Activated CD4-positive, alpha-beta T cell treated with anti-CD3 and anti-CD28 coated beads, Interleukin-2, amount 10 ng/mL, durations not matched to agents 24 days and 14 days (primary cell): ENCODE measurements at regions of chr22 and their contacts with region 1.

Region 1: DNA sequence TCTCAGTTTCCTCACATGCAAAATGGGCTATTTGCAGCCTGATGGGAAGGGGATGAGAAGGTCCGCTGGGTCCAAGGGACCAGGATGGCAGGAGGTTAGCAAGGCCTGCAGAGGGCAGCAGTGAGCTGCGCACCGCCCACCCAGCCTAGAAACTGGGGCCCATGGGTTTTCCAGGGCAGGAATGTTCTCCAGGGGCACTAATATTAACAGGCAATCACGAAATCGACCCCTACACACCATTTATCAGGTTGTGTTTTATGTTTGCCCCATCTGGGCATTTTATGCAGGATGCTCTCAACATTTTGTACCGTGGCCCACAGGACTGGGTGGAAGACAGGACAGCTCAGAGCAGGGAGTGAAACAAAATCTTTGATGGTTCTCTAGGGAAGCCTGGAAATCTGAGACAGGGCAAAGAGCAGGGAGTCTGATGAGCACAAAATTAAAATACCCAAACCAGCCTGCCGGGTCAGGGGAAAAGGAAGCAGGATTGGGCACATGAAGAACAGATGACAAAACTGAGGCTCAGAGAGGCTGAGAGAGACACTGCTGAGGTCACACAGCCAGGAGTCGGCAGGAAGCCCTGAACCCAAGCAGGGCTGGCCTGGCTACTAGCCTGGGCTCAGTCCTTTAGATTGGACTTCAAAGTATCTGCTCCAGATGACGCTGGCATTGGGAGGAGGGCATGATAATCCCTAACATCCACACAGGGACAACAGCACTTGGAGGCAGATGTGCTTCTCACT is 1.6 kb upstream of the BCR start:
- DNase-seq: peak; percentile 89
- H3K4me3 Mint-ChIP-seq: peak overlapping the region; percentile 54
- H3K27ac Mint-ChIP-seq: peak overlapping the region; percentile 51
- H3K4me1 Mint-ChIP-seq: peaks cover 53% of the 10 kb centered on the region
- H3K27me3 Mint-ChIP-seq: no peaks in the 10 kb centered on the region

Region 2: DNA sequence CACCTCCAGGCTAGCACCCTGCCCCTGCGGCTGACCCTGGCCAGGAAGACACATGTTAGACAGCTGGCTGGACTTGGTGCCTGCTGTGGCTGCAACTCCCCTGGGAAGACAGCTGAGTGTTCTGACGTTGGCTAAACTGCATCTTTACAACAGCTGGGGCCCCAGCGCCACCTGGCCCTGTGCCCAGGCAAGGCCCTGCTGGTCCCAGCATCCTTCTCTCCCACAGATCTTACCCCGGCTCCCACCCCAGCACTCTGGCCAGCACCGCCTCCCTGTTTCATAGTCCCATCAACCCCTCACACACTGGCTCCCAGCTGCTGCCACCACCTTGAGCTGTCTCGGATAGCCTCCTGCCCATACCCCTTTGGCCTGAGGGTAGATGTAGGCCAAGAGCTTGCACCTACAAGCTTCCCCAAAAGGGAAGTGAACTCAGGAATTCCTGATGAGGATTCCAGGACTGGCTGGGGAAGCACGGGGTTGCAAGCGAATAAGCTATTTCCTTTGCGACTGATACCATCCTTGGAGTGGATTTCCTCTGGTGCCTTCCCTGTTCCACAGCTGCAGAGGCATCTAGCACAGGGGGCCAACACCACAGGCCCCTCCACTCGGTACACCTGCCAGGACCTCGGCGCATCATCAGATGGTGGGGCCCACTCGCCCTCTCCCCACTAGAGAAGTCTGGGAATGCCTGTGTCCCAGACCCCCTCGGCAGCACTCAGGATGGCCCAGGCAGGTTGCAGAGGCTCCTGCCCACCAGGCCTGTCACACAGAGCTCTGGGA is 65.4 kb before region 1 on chr22:
- intact Hi-C with region 1: no loop called
- DNase-seq: no peak
- H3K4me3 Mint-ChIP-seq: no peak overlapping the region
- H3K27ac Mint-ChIP-seq: no peak overlapping the region
- H3K4me1 Mint-ChIP-seq: no peaks in the 10 kb centered on the region
- H3K27me3 Mint-ChIP-seq: no peaks in the 10 kb centered on the region

Region 3: GRCh38 chr22:23219822-23220484 is 41.3 kb after region 1 on chr22:
- intact Hi-C with region 1: loop called (anchors 1 kb)
- DNase-seq: peak; percentile 85
- H3K4me3 Mint-ChIP-seq: peak overlapping the region; percentile 78
- H3K27ac Mint-ChIP-seq: peak overlapping the region; percentile 91
- H3K4me1 Mint-ChIP-seq: peaks cover 90% of the 10 kb centered on the region
- H3K27me3 Mint-ChIP-seq: no peaks in the 10 kb centered on the region

Region 4: GRCh38 chr22:23240639-23241389 is 62.1 kb after region 1 on chr22:
- intact Hi-C with region 1: loop called (anchors 1 kb)
- DNase-seq: peak; percentile 73
- H3K4me3 Mint-ChIP-seq: peak overlapping the region; percentile 2
- H3K27ac Mint-ChIP-seq: peak overlapping the region; percentile 83
- H3K4me1 Mint-ChIP-seq: peaks cover 61% of the 10 kb centered on the region
- H3K27me3 Mint-ChIP-seq: no peaks in the 10 kb centered on the region

Region 5: GRCh38 chr22:23281406-23282088 is 102.9 kb after region 1 on chr22:
- intact Hi-C with region 1: loop called (anchors 1 kb)
- DNase-seq: peak; percentile 93
- H3K4me3 Mint-ChIP-seq: no peak overlapping the region
- H3K27ac Mint-ChIP-seq: no peak overlapping the region
- H3K4me1 Mint-ChIP-seq: peaks cover 12% of the 10 kb centered on the region
- H3K27me3 Mint-ChIP-seq: no peaks in the 10 kb centered on the region

Region 6: DNA sequence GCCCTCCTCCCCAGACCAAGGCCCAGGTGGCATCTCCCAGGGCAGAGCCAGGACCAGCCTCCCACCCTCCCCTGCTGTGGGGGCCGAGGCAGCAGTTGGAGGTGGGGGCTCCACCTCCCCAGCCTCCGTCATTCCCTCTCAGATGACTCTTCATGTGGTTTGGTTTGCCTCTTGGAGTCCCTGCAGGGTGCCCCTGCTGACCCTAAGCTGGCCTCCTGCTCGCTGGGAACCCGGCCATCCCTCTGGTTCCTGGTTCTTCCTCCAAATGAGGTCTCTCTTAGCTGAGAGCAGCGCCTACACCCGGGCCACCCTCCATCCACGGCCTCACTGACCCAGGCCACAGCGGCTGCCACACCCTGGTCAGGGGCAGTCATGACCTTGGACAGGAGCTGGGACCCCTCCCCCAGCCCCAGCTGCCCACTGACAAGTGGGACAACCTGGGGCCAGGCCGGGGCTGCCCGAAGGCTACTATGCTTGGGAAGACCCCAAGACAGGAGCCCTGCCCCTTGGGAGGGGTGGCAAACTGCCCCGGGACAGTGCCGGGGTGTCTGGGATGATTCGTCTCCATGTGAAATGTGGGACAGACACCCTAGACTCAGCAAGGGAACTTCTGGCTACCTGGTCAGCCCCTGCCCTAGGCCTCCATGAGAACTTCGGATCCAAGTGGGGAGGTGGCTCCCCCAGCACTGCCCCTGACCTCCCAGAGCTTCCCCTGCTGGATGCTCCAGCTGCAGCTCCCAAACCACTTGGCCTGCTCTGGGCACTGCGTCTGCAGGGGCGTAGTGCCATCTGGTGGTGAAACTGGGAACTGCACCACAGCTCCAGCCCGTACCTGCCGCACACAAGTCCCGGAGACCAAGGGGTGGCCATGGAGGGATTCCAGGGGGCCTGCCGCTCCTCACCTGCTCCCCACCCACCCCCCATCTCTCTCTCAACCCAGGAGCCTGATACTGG is 206.9 kb after region 1 on chr22:
- intact Hi-C with region 1: loop called (anchors 5 kb)
- DNase-seq: peak; percentile 94
- H3K4me3 Mint-ChIP-seq: no peak overlapping the region
- H3K27ac Mint-ChIP-seq: no peak overlapping the region
- H3K4me1 Mint-ChIP-seq: no peaks in the 10 kb centered on the region
- H3K27me3 Mint-ChIP-seq: no peaks in the 10 kb centered on the region